ENCODE measurements at regions of chr1 and their contacts with region 1.

Region 1: DNA sequence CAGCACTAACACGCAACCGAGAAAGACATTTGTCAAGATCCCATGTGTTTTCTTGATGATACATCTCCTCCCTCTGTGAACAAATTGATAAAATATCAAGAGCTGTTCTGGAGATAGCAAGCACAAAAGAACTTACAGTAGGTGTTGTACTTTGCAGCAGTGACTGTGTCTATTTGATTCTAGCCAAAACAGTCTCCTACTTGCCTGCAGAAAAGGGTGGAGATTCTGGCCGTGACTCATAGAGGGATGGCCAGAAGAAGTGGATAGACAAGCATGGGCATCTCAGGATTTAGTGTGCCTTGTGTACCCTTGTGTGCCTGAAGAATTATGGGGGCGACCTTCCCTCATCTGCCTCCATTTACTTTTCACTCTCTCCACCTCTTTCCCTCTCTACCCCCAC is 458.4 kb upstream of the LRRC7 start:
- DNase-seq: peak; percentile 75
- H3K4me3 ChIP-seq: no peak overlapping the region
- H3K27ac ChIP-seq: peak overlapping the region; percentile 36
- H3K4me1 ChIP-seq: peaks cover 14% of the 10 kb centered on the region
- H3K27me3 ChIP-seq: no peaks in the 10 kb centered on the region
- CTCF ChIP-seq: no peak

Region 2: DNA sequence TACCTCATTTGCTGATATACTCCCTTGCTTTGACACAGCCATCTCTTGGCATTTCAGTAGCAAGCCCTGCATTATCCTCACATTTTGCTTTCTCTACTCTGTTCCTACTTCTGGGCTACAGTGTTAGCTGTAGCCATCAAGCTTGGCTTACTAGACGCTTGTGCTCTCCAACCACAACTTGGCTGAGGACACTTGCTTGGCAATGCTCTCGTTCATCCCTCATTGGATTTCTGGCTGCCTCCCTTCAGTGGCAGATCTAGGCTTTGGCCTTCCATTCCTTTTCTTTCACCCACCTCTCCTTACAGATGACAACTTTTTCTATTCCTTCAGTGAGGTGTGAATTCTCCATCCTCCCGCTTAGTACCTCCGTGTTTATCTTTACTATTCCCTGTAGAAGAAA is 29.7 kb after region 1 on chr1:
- CTCF ChIA-PET with region 1: no interaction called
- dilution Hi-C with region 1: loop called (anchors 5 kb)
- in situ Hi-C with region 1: no loop called
- intact Hi-C with region 1: no loop called
- DNase-seq: no peak
- H3K4me3 ChIP-seq: no peak overlapping the region
- H3K27ac ChIP-seq: no peak overlapping the region
- H3K4me1 ChIP-seq: no peaks in the 10 kb centered on the region
- H3K27me3 ChIP-seq: no peaks in the 10 kb centered on the region
- CTCF ChIP-seq: no peak